BJ (cell line): ENCODE measurements at regions of chr7 and their contacts with region 1.

Region 1: GRCh38 chr7:24573626-24574338 is 530 bp downstream of the PALS2 start:
- DNase-seq: no peak
- H3K4me3 ChIP-seq: peak overlapping the region; percentile 57
- H3K27me3 ChIP-seq: peaks cover 5% of the 10 kb centered on the region
- CTCF ChIP-seq: no peak

Region 2: DNA sequence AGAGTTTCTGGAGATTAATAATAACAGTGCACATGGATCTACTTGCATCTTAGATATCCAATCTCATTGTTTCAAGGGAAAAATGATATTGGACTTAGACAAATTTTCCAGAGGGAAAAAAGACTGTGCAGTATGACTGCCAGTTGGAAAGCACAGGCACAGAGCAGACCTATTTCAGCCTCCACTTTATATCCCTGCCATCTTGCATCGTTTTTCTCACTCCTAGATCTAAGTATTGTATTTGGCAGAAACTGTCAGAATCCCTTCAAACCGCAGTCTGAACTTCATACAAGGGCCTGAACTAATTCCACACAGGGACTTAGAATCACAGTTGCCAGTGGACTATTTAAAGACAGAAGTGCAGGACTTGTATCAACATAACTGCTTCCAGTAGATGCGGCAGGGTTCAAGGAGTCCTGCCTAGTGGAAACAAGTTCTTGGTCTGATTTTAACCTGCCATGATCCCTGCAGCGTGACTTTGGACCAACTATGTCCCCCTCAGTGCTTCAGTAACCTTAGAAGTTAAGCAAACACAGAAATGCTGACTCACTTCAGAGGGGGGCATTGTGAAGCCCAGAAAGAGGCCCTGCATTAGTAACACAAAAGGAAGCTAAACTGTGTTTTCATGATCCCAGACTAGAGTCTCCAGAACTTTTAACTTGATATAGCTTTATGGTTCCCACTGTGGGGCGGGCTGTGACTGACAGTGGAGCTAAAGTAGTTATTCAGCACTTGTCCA is 96.2 kb before region 1 on chr7:
- CTCF ChIA-PET with region 1: no interaction called
- POLR2A ChIA-PET with region 1: no interaction called
- DNase-seq: peak; percentile 13
- H3K4me3 ChIP-seq: no peak overlapping the region
- H3K27me3 ChIP-seq: no peaks in the 10 kb centered on the region
- CTCF ChIP-seq: no peak

Region 3: GRCh38 chr7:24665564-24666294 is 91.9 kb after region 1 on chr7:
- CTCF ChIA-PET with region 1: interaction called, 27 read pairs
- POLR2A ChIA-PET with region 1: no interaction called
- DNase-seq: no peak
- H3K4me3 ChIP-seq: no peak overlapping the region
- H3K27me3 ChIP-seq: no peaks in the 10 kb centered on the region
- CTCF ChIP-seq: peak; percentile 68